Lower leg skin (tissue), 4 donors: ENCODE measurements at regions of chr6 and their contacts with region 1.

Region 1: DNA sequence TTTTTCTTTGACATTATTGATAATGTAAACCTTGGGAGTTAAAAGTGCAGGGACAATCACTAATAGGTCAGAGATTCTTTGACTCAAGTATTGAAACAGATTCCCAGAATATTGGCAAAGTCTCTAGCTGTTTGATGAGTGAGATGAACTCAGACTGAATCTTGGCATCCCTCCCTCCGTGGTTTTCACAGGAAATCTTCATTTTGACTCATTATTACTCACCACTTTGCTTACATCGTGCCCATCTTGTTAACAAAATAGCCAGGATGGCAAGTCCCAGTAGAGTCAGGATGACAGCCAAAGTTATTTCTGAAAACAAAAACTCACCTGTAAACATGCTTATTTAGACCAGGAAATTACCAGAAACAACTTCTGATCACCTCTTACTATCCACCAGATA is 2.0 kb downstream of the TSBP1 start:
- DNase-seq: no peak
- H3K4me3 ChIP-seq: no peak overlapping the region
- CTCF ChIP-seq: no peak
- POLR2A ChIP-seq: no peak

Region 2: DNA sequence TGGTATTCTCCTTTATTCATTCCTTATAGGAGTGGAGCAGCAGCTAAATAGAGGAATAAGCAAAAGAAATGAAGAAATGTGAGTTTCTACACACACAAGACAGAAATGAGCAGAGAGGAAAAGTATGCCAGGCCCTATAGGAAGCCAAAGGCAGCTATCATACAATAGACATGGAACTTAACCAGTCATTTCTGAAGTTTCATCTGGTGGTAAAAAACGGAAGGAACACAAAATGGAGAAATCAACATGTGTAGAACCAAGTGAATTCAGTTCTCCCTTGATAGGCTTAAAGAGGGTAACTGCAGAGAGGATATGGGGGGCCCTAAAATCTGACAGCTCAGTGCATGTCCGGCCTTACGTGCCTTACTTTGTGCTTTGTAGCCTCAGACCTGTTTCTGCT is 42.6 kb before region 1 on chr6:
- intact Hi-C with region 1: loop called (anchors 1 kb)
- DNase-seq: no peak
- H3K4me3 ChIP-seq: no peak overlapping the region
- CTCF ChIP-seq: no peak
- POLR2A ChIP-seq: no peak

Region 3: DNA sequence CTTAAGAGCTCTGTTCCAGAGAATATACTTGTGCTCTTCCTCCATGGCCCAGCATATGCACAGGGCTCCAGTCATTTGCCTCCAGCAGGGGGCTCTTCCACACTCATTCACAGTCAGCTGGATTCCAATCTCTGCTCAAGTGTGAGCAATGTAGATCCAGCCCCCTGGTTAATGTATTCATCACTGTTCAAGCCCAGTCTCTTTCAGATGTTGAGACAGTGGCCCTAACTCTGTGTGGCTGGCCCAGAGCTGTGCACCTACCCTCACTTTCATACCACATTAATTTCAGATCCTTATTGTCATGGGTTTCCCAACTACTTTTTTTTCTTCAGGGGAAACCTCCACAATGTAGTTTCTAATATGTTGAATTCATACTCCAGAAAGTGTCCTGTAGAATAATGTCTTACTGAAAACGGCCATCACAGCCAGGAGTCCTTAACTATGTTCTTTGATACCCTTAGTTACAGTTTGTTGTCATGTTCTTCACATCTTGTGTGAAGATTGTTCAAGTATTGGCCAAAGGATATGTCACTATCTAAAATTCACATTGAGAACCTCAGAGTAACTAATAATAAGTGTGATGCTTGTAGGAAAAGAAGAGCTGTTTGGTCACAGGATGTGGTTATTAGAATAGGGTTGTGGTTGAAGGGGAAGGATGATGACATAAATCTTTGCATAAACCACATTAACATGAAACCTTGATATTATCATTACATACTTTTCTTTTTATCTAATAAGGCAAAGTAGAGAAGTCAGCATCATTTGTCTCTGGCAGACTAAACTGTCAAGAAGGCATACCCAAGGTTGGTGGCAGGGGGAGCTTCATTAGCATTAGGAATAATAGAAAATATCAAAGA is 253.1 kb after region 1 on chr6:
- intact Hi-C with region 1: no loop called
- DNase-seq: no peak
- H3K4me3 ChIP-seq: no peak overlapping the region
- CTCF ChIP-seq: no peak
- POLR2A ChIP-seq: no peak